Endothelial cell of umbilical vein (primary cell): ENCODE measurements at regions of chr15 and their contacts with region 1.

Region 1: DNA sequence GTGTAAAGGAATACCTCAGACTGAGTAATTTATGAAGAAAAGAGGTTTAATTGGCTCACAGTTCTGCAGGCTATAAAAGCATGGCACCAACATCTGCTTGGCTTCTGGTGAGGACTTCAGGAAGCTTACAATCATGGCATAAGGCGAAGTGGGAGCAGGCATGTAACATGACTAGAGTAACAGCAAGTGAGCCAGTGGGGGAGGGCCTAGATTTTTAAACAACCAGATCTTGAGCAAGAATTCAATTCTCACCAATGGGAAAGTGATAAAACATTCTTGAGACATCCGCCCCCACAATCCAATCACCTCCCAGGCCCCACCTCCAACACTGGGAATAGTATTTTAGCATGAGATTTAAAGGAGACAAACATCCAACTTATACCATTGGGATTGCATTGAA is 44.2 kb upstream of the BCL2A1 start:
- DNase-seq: no peak
- H3K4me3 ChIP-seq: no peak overlapping the region
- H3K27ac ChIP-seq: no peak overlapping the region
- H3K4me1 ChIP-seq: no peaks in the 10 kb centered on the region
- H3K27me3 ChIP-seq: no peaks in the 10 kb centered on the region
- CTCF ChIP-seq: no peak
- POLR2A ChIP-seq: no peak

Region 2: GRCh38 chr15:79904271-79904670 is 110.9 kb before region 1 on chr15:
- CTCF ChIA-PET with region 1: no interaction called
- POLR2A ChIA-PET with region 1: no interaction called
- dilution Hi-C with region 1: no loop called
- intact Hi-C with region 1: no loop called
- DNase-seq: no peak
- H3K4me3 ChIP-seq: no peak overlapping the region
- H3K27ac ChIP-seq: no peak overlapping the region
- H3K4me1 ChIP-seq: peaks cover 6% of the 10 kb centered on the region
- H3K27me3 ChIP-seq: no peaks in the 10 kb centered on the region
- CTCF ChIP-seq: no peak
- POLR2A ChIP-seq: no peak

Region 3: DNA sequence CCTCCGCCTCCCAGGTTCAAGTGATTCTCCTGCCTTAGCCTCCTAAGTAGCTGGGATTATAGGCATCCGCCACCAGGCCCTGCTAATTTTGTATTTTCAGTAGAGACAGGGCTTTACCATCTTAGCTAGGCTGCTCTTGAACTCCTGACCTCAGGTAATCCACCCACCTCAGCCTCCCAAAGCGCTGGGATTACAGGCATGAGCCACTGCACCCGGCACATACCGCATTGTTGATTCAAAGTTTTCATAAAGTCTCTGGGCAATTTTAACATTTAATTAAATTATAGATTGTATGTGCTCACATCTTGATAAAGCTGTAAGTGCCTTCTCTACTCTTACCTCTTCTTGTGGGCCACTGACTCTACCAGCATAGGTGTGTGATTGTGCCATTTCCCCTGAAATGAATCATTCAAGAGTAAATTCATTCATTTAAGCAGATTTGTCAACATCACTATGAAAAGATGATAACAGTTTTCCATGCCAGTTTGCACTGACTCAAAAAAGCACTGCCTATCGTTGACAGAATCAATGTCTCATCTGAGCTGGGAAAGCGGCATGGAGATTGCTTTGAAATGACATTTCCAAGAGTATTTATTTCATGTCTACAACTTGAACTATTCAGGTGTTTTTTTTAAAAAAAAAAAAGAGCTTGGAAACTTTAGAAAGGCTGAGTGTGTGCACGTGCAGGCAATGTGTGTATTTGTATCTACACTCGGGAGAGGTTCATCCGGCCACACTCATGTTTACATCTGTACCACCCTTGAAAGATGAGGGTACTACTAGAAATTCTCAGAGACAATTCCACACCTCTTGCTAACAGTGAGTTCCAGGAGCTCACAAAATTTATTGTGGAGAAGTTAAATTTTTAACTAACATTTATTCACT is 47.6 kb before region 1 on chr15:
- CTCF ChIA-PET with region 1: no interaction called
- POLR2A ChIA-PET with region 1: no interaction called
- dilution Hi-C with region 1: no loop called
- intact Hi-C with region 1: loop called (anchors 1 kb)
- DNase-seq: no peak
- H3K4me3 ChIP-seq: no peak overlapping the region
- H3K27ac ChIP-seq: no peak overlapping the region
- H3K4me1 ChIP-seq: no peaks in the 10 kb centered on the region
- H3K27me3 ChIP-seq: no peaks in the 10 kb centered on the region
- CTCF ChIP-seq: no peak
- POLR2A ChIP-seq: no peak